ENCODE measurements at regions of chr3 and their contacts with region 1.

Region 1: DNA sequence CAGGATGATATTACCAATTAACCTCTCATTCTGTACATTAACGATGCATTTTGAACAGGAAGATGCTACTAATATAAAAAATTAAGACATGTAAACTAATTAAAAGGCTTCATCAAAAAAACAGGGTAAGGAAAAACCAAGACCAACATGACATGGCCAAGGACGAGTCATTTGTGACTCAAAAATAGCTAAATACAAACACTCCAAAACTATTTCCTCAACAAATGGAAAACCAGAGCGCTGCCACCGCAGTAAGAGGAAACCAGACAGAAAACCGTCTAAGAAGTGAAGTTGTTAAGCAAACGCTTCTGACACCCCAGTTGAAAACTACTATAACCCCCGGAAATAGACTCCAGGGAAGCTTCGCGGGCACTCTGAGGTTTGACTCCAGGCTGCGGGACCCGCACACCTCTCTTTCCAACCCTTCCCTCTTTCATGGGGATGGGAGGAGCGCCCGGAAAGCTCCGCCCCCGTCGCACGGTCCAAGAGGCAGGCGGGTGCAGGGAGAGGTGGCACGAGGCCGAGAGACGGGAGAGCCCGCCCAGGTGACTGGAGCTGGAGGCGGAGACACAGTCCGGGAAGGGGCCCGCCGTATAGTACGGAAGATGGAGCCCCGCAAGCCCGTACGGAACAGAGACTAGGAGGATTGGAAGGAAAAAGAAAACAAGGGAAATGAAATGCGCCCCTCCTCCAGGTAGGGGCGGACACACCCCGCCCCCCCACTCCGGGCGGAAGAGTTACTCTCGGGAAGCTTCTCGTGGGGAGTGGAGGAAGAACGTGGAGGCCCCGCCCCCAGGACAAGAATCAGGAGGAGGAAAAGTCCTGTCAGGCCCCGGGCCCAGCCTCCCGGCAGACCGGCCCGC is 708 bp downstream of the DCAF1 start:
- DNase-seq: peak; percentile 96
- H3K4me3 Mint-ChIP-seq: peak overlapping the region; percentile 88
- H3K27ac Mint-ChIP-seq: peak overlapping the region; percentile 98
- H3K4me1 Mint-ChIP-seq: peaks cover 8% of the 10 kb centered on the region
- H3K27me3 Mint-ChIP-seq: no peaks in the 10 kb centered on the region
- CTCF ChIP-seq: no peak

Region 2: GRCh38 chr3:51391075-51391567 is 108.0 kb before region 1 on chr3 and contains the start of gene RBM15B:
- CTCF ChIA-PET with region 1: interaction called, 31 read pairs
- POLR2A ChIA-PET with region 1: interaction called, 25 read pairs
- intact Hi-C with region 1: loop called (anchors 2 kb)
- DNase-seq: peak; percentile 95
- H3K4me3 Mint-ChIP-seq: peak within 1 kb of the TSS; percentile 71
- H3K27ac Mint-ChIP-seq: peak within 1 kb of the TSS; percentile 67
- H3K4me1 Mint-ChIP-seq: peaks cover 32% of the 10 kb centered on the region
- H3K27me3 Mint-ChIP-seq: no peaks in the 10 kb centered on the region
- CTCF ChIP-seq: peak; percentile 61
- total RNA-seq, gene RBM15B: 32.5 and 33.6 TPM in 2 replicates

Region 3: GRCh38 chr3:51538459-51539290 is 39.6 kb after region 1 on chr3 and contains the start of gene RAD54L2:
- CTCF ChIA-PET with region 1: interaction called, 32 read pairs
- POLR2A ChIA-PET with region 1: interaction called, 94 read pairs
- intact Hi-C with region 1: loop called (anchors 2 kb)
- DNase-seq: peak; percentile 82
- H3K4me3 Mint-ChIP-seq: peak within 1 kb of the TSS; percentile 74
- H3K27ac Mint-ChIP-seq: peak within 1 kb of the TSS; percentile 65
- H3K4me1 Mint-ChIP-seq: peaks cover 17% of the 10 kb centered on the region
- H3K27me3 Mint-ChIP-seq: no peaks in the 10 kb centered on the region
- CTCF ChIP-seq: peak; percentile 22
- total RNA-seq, gene RAD54L2: 23.5 and 28.2 TPM in 2 replicates

Region 4: GRCh38 chr3:51620543-51620942 is 121.4 kb after region 1 on chr3:
- CTCF ChIA-PET with region 1: interaction called, 11 read pairs
- POLR2A ChIA-PET with region 1: interaction called, 6 read pairs
- intact Hi-C with region 1: no loop called
- DNase-seq: no peak
- H3K4me3 Mint-ChIP-seq: no peak overlapping the region
- H3K27ac Mint-ChIP-seq: peak overlapping the region; percentile 51
- H3K4me1 Mint-ChIP-seq: peaks cover 26% of the 10 kb centered on the region
- H3K27me3 Mint-ChIP-seq: no peaks in the 10 kb centered on the region
- CTCF ChIP-seq: no peak

Region 5: GRCh38 chr3:51662456-51662855 is 163.3 kb after region 1 on chr3:
- CTCF ChIA-PET with region 1: interaction called, 213 read pairs
- POLR2A ChIA-PET with region 1: interaction called, 173 read pairs
- intact Hi-C with region 1: no loop called
- DNase-seq: no peak
- H3K4me3 Mint-ChIP-seq: no peak overlapping the region
- H3K27ac Mint-ChIP-seq: no peak overlapping the region
- H3K4me1 Mint-ChIP-seq: no peaks in the 10 kb centered on the region
- H3K27me3 Mint-ChIP-seq: no peaks in the 10 kb centered on the region
- CTCF ChIP-seq: no peak

Region 6: DNA sequence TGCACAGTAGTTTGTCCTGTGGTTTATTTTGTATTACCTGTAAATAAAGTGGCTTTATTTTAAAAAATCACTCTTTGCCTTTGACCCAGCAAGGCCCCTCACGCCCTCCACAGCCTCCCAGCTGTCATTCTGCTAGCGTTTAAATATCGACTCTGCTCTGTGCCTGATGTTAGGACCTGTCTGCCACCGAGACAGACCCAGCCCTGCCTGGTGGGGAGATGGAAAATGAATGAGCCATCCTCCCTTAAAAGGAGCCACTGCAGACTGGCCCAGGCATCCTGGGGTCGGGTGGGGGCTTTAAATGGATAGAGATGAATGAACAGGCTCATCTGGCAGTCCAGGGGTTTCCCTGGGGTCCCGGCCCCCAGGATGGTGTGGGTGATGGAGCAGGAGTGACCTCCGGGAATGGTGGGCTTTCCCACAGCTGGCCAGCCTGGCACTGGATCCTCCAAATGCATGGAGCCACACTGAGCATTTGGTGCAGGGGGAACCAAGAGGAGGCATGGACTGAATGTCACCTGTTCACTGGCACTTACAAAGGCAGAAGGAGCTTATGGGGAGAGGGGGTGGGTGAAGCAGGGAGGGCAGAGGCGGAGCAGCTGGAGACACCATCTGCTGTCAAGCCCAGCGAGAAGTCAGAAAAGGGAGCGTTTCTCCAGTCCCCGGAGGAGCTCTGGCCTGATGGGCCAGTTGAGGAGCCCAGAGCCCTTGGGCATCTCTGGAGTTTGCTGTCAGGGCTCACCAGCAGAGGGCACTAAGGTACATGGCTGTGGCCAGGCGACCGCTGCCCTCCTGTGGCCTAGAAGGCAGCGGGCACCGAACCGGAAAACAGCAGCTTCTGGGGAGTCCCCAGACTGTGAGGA is 219.7 kb after region 1 on chr3:
- CTCF ChIA-PET with region 1: interaction called, 13 read pairs
- POLR2A ChIA-PET with region 1: interaction called, 3 read pairs
- intact Hi-C with region 1: no loop called
- DNase-seq: peak; percentile 72
- H3K4me3 Mint-ChIP-seq: no peak overlapping the region
- H3K27ac Mint-ChIP-seq: no peak overlapping the region
- H3K4me1 Mint-ChIP-seq: no peaks in the 10 kb centered on the region
- H3K27me3 Mint-ChIP-seq: no peaks in the 10 kb centered on the region
- CTCF ChIP-seq: peak; percentile 82

Region 7: GRCh38 chr3:52197842-52198668 is 698.9 kb after region 1 on chr3 and contains the start of gene ALAS1:
- CTCF ChIA-PET with region 1: no interaction called
- POLR2A ChIA-PET with region 1: no interaction called
- intact Hi-C with region 1: no loop called
- DNase-seq: peak; percentile 84
- H3K4me3 Mint-ChIP-seq: peak within 1 kb of the TSS; percentile 97
- H3K27ac Mint-ChIP-seq: peak within 1 kb of the TSS; percentile 70
- H3K4me1 Mint-ChIP-seq: peaks cover 28% of the 10 kb centered on the region
- H3K27me3 Mint-ChIP-seq: no peaks in the 10 kb centered on the region
- CTCF ChIP-seq: no peak
- total RNA-seq, gene ALAS1: 29.2 and 35.7 TPM in 2 replicates